Activated CD4-positive, alpha-beta T cell treated with anti-CD3 and anti-CD28 coated beads for 36 hours (primary cell): ENCODE measurements at regions of chr20 and their contacts with region 1.

Region 1: GRCh38 chr20:5658912-5659345 is 91.3 kb upstream of the SHLD1 start:
- DNase-seq: peak; percentile 82
- ATAC-seq: peak; percentile 73
- H3K4me3 Mint-ChIP-seq: no peak overlapping the region
- H3K27ac Mint-ChIP-seq: peak overlapping the region; percentile 47
- H3K4me1 Mint-ChIP-seq: peaks cover 31% of the 10 kb centered on the region
- H3K27me3 Mint-ChIP-seq: no peaks in the 10 kb centered on the region

Region 2: GRCh38 chr20:5041433-5041832 is 617.5 kb before region 1 on chr20:
- CTCF ChIA-PET with region 1: no interaction called
- POLR2A ChIA-PET with region 1: no interaction called
- intact Hi-C with region 1: no loop called
- DNase-seq: no peak
- ATAC-seq: no peak
- H3K4me3 Mint-ChIP-seq: no peak overlapping the region
- H3K27ac Mint-ChIP-seq: no peak overlapping the region
- H3K4me1 Mint-ChIP-seq: peaks cover 4% of the 10 kb centered on the region
- H3K27me3 Mint-ChIP-seq: no peaks in the 10 kb centered on the region

Region 3: GRCh38 chr20:5442101-5442500 is 216.8 kb before region 1 on chr20:
- CTCF ChIA-PET with region 1: no interaction called
- POLR2A ChIA-PET with region 1: no interaction called
- intact Hi-C with region 1: no loop called
- DNase-seq: no peak
- ATAC-seq: no peak
- H3K4me3 Mint-ChIP-seq: no peak overlapping the region
- H3K27ac Mint-ChIP-seq: no peak overlapping the region
- H3K4me1 Mint-ChIP-seq: no peaks in the 10 kb centered on the region
- H3K27me3 Mint-ChIP-seq: peaks cover 16% of the 10 kb centered on the region

Region 4: DNA sequence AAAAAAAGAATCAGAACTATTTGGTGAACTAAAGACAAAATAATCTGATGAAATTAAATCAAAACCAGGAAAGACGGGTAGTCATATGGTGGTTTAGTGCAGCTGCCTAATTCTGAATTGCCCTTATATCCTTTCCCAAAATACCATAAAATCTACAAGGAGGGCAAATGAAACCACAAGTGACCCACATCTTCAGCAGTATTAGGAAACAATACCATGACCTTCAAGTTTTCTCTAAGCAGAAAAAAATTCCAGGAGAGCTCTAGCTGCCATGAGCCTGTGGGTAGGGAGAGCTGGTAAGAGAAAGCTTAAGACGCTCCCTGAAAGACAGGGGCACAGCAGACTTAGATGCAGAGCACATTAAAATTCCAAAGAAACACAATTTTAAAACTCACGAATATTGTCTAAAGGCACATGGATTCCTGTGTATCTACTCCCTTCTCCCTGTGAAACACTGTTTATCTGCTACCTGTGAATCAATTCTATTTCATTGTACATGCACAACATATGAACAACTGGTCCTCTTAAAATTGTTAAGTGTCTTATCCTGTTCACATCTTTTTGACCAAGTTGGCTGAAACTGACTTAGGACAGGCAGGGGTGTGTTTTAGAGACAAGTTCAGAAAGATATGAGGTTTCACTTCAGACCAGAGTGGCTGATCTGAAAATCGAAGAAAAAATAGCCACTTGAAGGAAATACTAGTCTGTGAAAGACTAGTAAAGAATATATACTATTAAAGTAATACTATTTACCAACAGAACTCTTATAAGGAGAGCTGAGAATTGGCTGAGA is 62.3 kb before region 1 on chr20:
- CTCF ChIA-PET with region 1: no interaction called
- POLR2A ChIA-PET with region 1: no interaction called
- intact Hi-C with region 1: no loop called
- DNase-seq: no peak
- ATAC-seq: no peak
- H3K4me3 Mint-ChIP-seq: no peak overlapping the region
- H3K27ac Mint-ChIP-seq: peak overlapping the region; percentile 37
- H3K4me1 Mint-ChIP-seq: peaks cover 62% of the 10 kb centered on the region
- H3K27me3 Mint-ChIP-seq: no peaks in the 10 kb centered on the region

Region 5: GRCh38 chr20:5642155-5642981 is 16.6 kb before region 1 on chr20:
- CTCF ChIA-PET with region 1: interaction called, 6 read pairs
- POLR2A ChIA-PET with region 1: interaction called, 14 read pairs
- intact Hi-C with region 1: loop called (anchors 1 to 2 kb)
- DNase-seq: no peak
- ATAC-seq: no peak
- H3K4me3 Mint-ChIP-seq: no peak overlapping the region
- H3K27ac Mint-ChIP-seq: no peak overlapping the region
- H3K4me1 Mint-ChIP-seq: peaks cover 43% of the 10 kb centered on the region
- H3K27me3 Mint-ChIP-seq: no peaks in the 10 kb centered on the region

Region 6: DNA sequence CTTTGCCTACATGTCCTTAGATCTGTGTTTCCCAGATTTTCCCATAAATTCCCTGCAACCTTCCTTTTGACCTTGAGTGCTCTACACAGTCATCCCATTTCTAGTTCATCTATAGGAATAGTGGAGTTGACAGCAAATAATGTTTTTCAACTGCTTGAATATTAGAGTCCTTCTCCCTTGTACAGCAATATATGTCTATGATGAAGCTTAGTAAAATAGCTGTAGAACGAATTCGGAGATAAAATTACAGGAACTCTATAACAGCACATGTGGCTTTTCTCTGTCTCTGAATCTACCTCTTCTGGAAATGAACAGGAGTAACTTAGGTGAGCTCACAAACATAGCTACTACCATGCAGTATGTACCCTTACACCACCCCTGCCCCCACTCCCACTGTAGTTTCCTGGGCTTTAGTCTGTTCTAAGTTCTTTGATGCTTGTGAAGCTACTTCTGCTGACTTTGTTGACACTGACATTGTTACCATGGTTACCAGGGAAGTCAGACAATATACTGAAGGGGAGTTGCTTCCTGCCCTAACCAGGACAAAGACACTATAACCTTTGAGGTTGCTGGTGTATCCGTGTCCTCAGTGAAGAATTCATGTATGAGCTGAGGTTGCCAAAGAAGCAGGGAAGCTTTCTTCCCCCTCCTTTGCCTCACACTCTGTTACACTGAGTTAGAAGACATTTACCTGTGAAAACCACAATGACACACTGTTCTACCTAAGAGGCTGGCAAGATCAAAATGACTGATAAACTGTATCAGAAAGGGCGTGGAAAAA is 55.5 kb after region 1 on chr20:
- CTCF ChIA-PET with region 1: interaction called, 3 read pairs
- POLR2A ChIA-PET with region 1: interaction called, 6 read pairs
- intact Hi-C with region 1: loop called (anchors 1 kb)
- DNase-seq: peak; percentile 69
- ATAC-seq: peak; percentile 93
- H3K4me3 Mint-ChIP-seq: no peak overlapping the region
- H3K27ac Mint-ChIP-seq: peak overlapping the region; percentile 82
- H3K4me1 Mint-ChIP-seq: peaks cover 34% of the 10 kb centered on the region
- H3K27me3 Mint-ChIP-seq: no peaks in the 10 kb centered on the region

Region 7: GRCh38 chr20:6134592-6134991 is 475.7 kb after region 1 on chr20:
- CTCF ChIA-PET with region 1: no interaction called
- POLR2A ChIA-PET with region 1: no interaction called
- intact Hi-C with region 1: no loop called
- DNase-seq: no peak
- ATAC-seq: no peak
- H3K4me3 Mint-ChIP-seq: no peak overlapping the region
- H3K27ac Mint-ChIP-seq: no peak overlapping the region
- H3K4me1 Mint-ChIP-seq: no peaks in the 10 kb centered on the region
- H3K27me3 Mint-ChIP-seq: peaks cover 19% of the 10 kb centered on the region